PC-3 (cell line): ENCODE measurements at regions of chr3 and their contacts with region 1.

Region 1: GRCh38 chr3:187403768-187404270 is 35.6 kb downstream of the RTP4 start:
- DNase-seq: peak; percentile 89
- ATAC-seq: peak; percentile 96
- H3K4me3 ChIP-seq: peak overlapping the region; percentile 32; the same call in 1 of the 2 replicates
- H3K27ac ChIP-seq: peak overlapping the region; percentile 72
- H3K4me1 ChIP-seq: peaks cover 20% of the 10 kb centered on the region
- H3K27me3 ChIP-seq: peaks cover 7% of the 10 kb centered on the region
- CTCF ChIP-seq: no peak

Region 2: GRCh38 chr3:187352581-187353575 is 50.9 kb before region 1 on chr3:
- CTCF ChIA-PET with region 1: no interaction called
- POLR2A ChIA-PET with region 1: no interaction called
- intact Hi-C with region 1: loop called (anchors 1 kb)
- DNase-seq: peak; percentile 57
- ATAC-seq: peak; percentile 86
- H3K4me3 ChIP-seq: 0 out of 2 replicates have a peak overlapping the region, but pooled peaks have one; percentile 10
- H3K27ac ChIP-seq: peak overlapping the region; percentile 44; the same call in 1 of the 2 replicates
- H3K4me1 ChIP-seq: peaks cover 13% of the 10 kb centered on the region
- H3K27me3 ChIP-seq: peaks cover 26% of the 10 kb centered on the region
- CTCF ChIP-seq: no peak